H1 (cell line): ENCODE measurements at regions of chr17 and their contacts with region 1.

Region 1: GRCh38 chr17:2929881-2930533 is 133.4 kb downstream of the OR1D5 start:
- DNase-seq: peak; percentile 47 to 89
- H3K4me3 ChIP-seq: no peak overlapping the region
- H3K27ac ChIP-seq: no peak overlapping the region
- H3K4me1 ChIP-seq: peaks cover 8 to 25% (median 15%) of the 10 kb centered on the region in 4 experiments
- H3K27me3 ChIP-seq: no peaks in the 10 kb centered on the region
- CTCF ChIP-seq: peak; percentile 82 to 87 (median 82)
- EP300 ChIP-seq: peak in 1 of 2 experiments; percentile 25; a peak in 1 of 3 replicates
- POLR2A ChIP-seq: no peak
- RAD21 ChIP-seq: peak; percentile 87 to 91

Region 2: GRCh38 chr17:2749784-2750181 is 180.2 kb before region 1 on chr17:
- CTCF ChIA-PET with region 1: no interaction called
- POLR2A ChIA-PET with region 1: no interaction called
- DNase-seq: peak; percentile 44 to 96
- H3K4me3 ChIP-seq: peak overlapping the region in 2 of 4 experiments; percentile 60 to 74; a peak in 4 of 8 replicates
- H3K27ac ChIP-seq: no peak overlapping the region
- H3K4me1 ChIP-seq: peaks cover 0 to 11% (median 4%) of the 10 kb centered on the region in 4 experiments; a peak in 3 of 7 replicates
- H3K27me3 ChIP-seq: peaks cover 0 to 4% (median 1%) of the 10 kb centered on the region in 4 experiments; a peak in 3 of 7 replicates
- CTCF ChIP-seq: no peak
- EP300 ChIP-seq: no peak; a peak in 1 of 3 replicates
- POLR2A ChIP-seq: no peak
- RAD21 ChIP-seq: no peak

Region 3: GRCh38 chr17:2786176-2786881 is 143.7 kb before region 1 on chr17:
- CTCF ChIA-PET with region 1: interaction called, 13 read pairs
- POLR2A ChIA-PET with region 1: no interaction called
- DNase-seq: peak; percentile 92 to 100
- H3K4me3 ChIP-seq: no peak overlapping the region
- H3K27ac ChIP-seq: no peak overlapping the region
- H3K4me1 ChIP-seq: no peaks in the 10 kb centered on the region; a peak in 1 of 7 replicates
- H3K27me3 ChIP-seq: no peaks in the 10 kb centered on the region
- CTCF ChIP-seq: peak; percentile 93 to 99 (median 98)
- EP300 ChIP-seq: no peak; a peak in 1 of 3 replicates
- POLR2A ChIP-seq: no peak
- RAD21 ChIP-seq: peak; percentile 78 to 87

Region 4: GRCh38 chr17:2853111-2853721 is 76.8 kb before region 1 on chr17:
- CTCF ChIA-PET with region 1: interaction called, 233 read pairs
- POLR2A ChIA-PET with region 1: interaction called, 6 read pairs
- DNase-seq: peak in 1 of 2 experiments; percentile 76
- H3K4me3 ChIP-seq: peak overlapping the region; percentile 51 to 90 (median 80)
- H3K27ac ChIP-seq: no peak overlapping the region
- H3K4me1 ChIP-seq: peaks cover 12 to 32% (median 22%) of the 10 kb centered on the region in 4 experiments
- H3K27me3 ChIP-seq: peaks cover 0 to 5% (median 2%) of the 10 kb centered on the region in 4 experiments; a peak in 2 of 7 replicates
- CTCF ChIP-seq: no peak
- EP300 ChIP-seq: no peak
- POLR2A ChIP-seq: no peak
- RAD21 ChIP-seq: no peak

Region 5: DNA sequence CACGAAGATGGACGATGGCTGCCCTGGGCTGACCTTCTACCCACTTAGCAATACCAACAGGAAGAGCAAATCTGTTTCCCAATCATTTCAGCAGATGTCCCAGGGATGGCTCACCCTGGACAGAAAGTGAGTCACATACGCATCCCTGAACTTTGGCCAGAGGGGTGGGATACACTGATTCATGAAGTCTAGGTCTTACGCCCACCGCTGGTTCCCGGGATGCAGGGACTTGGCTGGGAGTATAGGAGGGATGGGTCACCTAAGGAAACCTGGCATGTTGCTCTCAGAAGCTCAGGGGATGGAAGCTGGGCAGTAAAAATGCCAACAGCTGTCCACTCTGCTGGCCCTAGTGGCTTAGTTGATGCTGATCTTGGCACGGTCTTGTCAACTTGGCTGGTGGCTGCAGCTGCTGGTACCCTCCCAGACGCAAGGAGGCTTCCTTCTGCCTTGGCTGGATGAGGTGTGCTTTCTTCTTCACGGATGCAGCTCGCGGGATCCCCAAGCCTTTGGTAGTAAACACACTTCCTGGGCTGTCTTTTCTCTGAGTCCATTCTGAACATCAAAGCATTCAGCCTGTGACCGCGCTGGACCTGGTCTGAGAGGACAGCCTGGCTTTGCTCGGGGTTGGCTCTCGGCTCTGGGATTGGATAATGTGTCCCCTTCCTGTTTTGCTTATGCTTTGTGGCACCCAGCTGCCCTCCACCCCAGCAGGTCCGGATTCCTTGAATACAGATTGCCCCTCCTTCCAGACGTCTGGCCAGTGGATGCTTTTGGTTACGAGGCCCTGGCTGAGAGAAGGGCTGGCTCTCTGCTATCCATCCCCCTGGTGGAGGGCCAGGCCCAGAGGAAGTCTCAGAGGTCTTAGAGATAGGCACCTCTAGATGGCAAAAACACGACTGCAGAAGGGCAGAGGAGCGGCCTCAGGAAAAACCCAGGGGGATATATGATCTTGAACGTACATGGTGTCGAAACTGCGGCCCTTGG is 62.3 kb before region 1 on chr17:
- CTCF ChIA-PET with region 1: interaction called, 13 read pairs
- POLR2A ChIA-PET with region 1: interaction called, 3 read pairs
- DNase-seq: peak in 1 of 2 experiments; percentile 67
- H3K4me3 ChIP-seq: no peak overlapping the region
- H3K27ac ChIP-seq: peak overlapping the region; percentile 21; the same call in 1 of the 2 replicates
- H3K4me1 ChIP-seq: peaks cover 11 to 33% (median 28%) of the 10 kb centered on the region in 4 experiments
- H3K27me3 ChIP-seq: no peaks in the 10 kb centered on the region
- CTCF ChIP-seq: peak; percentile 33 to 62 (median 52)
- EP300 ChIP-seq: no peak
- POLR2A ChIP-seq: no peak
- RAD21 ChIP-seq: peak; percentile 40 to 52

Region 6: DNA sequence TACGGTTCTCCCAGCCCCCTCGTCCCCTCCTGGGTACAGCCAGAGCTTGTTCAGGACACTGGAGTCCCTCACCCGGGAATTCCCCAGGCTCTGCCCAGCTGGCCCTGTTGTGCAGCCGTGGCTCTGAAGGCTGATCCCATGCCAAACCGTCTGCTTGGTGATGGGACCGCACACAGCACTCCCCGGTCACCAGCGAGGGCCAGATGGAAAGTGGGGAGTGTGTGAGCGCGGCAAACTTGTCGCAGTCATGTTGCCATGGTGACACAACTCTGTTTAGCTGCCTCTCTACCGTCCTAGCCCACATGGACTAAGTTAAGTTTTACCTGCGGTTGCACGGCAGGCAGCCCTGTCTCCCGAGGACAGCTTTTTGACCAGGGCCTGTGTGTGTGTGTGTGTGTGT is 25.9 kb before region 1 on chr17:
- CTCF ChIA-PET with region 1: interaction called, 23 read pairs
- POLR2A ChIA-PET with region 1: interaction called, 4 read pairs
- DNase-seq: no peak
- H3K4me3 ChIP-seq: no peak overlapping the region
- H3K27ac ChIP-seq: peak overlapping the region; percentile 35; the same call in 1 of the 2 replicates
- H3K4me1 ChIP-seq: peaks cover 0 to 16% (median 10%) of the 10 kb centered on the region in 4 experiments; a peak in 6 of 7 replicates
- H3K27me3 ChIP-seq: no peaks in the 10 kb centered on the region
- CTCF ChIP-seq: no peak
- EP300 ChIP-seq: no peak
- POLR2A ChIP-seq: no peak
- RAD21 ChIP-seq: no peak

Region 7: DNA sequence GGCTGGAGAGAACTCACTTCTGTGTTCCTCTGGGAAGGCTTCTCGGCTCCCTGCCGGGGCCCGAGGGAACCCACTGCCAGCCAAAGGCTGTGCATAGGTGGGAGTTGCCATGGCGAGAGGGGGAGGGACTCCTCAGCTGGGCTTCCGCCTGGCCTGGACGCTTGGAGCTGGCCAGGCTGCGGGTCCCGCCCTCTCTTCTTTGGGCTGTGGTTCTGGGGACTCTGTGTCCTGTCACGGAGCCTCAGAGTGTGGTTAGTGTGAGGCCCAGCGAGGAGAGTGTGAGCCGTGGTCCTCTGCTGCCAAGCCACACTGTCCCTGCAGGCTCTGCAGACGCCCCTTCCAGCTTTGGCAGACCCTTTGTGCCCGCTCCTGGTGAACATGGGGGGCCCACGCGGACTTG is 10.3 kb after region 1 on chr17:
- CTCF ChIA-PET with region 1: interaction called, 10 read pairs
- POLR2A ChIA-PET with region 1: no interaction called
- DNase-seq: no peak
- H3K4me3 ChIP-seq: no peak overlapping the region
- H3K27ac ChIP-seq: no peak overlapping the region
- H3K4me1 ChIP-seq: peaks cover 0 to 7% (median 4%) of the 10 kb centered on the region in 4 experiments; a peak in 3 of 7 replicates
- H3K27me3 ChIP-seq: no peaks in the 10 kb centered on the region
- CTCF ChIP-seq: no peak
- EP300 ChIP-seq: no peak
- POLR2A ChIP-seq: no peak
- RAD21 ChIP-seq: no peak

Region 8: DNA sequence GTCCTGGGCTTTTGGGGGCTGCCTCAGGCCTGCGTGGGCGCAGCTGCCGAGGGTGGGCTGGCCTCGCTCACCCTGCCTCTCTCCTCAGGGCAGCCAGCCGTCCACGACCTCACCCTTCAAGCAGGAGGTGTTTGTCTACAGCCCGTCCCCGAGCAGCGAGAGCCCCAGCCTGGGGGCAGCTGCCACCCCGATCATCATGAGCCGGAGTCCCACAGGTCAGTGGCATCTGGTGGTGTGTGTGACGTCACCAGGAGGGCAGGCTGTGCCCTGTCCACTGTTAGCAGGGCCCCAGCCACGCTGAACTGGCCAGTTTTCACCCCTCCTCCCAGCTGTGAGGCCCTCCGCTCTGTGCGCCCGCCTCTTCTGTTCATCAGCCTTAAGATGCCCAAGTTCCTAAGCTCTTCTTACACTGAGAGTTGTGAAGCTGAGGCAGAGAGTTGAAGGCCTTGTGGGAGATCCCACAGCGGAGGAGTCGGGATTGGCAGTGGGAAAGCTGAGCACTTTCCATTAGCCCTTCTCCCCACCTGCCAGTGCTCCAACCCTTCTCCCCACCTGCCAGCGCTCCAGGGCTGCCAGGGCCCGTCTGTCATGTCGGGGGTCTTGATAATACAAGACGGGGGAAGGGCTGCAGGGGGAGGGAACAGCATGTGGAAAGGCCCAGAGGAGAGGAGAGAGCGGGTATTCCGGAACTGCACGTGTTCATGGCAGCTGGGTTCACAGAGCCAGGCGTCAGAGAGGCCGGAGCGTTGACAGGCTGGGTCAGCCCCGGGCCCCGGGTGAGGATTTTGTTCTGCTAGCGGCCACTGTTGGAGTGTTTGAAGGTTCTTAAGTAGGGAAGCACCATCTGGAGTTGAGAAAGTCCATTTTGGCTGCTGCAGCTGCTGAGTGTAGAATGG is 97.1 kb after region 1 on chr17:
- CTCF ChIA-PET with region 1: no interaction called
- POLR2A ChIA-PET with region 1: no interaction called
- DNase-seq: no peak
- H3K4me3 ChIP-seq: no peak overlapping the region
- H3K27ac ChIP-seq: no peak overlapping the region
- H3K4me1 ChIP-seq: no peaks in the 10 kb centered on the region
- H3K27me3 ChIP-seq: no peaks in the 10 kb centered on the region
- CTCF ChIP-seq: no peak
- EP300 ChIP-seq: no peak
- POLR2A ChIP-seq: no peak
- RAD21 ChIP-seq: no peak

Region 9: GRCh38 chr17:3400055-3400454 is 470.0 kb after region 1 on chr17:
- CTCF ChIA-PET with region 1: no interaction called
- POLR2A ChIA-PET with region 1: no interaction called
- DNase-seq: no peak
- H3K4me3 ChIP-seq: no peak overlapping the region
- H3K27ac ChIP-seq: no peak overlapping the region
- H3K4me1 ChIP-seq: no peaks in the 10 kb centered on the region
- H3K27me3 ChIP-seq: no peaks in the 10 kb centered on the region
- CTCF ChIP-seq: no peak
- EP300 ChIP-seq: no peak
- POLR2A ChIP-seq: no peak
- RAD21 ChIP-seq: no peak